ENCODE measurements at regions of chr22 and their contacts with region 1.

Region 1: DNA sequence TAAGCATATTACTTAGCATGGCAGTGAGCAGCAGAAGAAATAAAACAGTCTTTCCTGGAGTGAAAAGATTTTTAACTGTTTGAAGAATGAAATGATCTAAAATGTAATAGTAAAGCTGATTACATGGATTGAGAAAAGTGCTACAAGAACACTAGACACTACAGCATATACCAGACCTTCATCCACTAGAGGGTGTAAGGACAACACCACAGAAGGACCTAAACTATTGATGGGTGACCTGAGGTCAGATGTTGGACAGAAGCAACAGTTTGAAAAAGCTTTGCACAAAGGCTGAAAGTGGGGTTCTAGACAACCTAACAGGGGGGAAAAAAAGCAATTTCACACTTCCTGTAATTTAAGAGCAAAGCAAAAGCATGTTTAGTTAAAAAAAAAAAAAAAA is 97.7 kb downstream of the RBFOX2 start:
- DNase-seq: peak; percentile 67

Region 2: DNA sequence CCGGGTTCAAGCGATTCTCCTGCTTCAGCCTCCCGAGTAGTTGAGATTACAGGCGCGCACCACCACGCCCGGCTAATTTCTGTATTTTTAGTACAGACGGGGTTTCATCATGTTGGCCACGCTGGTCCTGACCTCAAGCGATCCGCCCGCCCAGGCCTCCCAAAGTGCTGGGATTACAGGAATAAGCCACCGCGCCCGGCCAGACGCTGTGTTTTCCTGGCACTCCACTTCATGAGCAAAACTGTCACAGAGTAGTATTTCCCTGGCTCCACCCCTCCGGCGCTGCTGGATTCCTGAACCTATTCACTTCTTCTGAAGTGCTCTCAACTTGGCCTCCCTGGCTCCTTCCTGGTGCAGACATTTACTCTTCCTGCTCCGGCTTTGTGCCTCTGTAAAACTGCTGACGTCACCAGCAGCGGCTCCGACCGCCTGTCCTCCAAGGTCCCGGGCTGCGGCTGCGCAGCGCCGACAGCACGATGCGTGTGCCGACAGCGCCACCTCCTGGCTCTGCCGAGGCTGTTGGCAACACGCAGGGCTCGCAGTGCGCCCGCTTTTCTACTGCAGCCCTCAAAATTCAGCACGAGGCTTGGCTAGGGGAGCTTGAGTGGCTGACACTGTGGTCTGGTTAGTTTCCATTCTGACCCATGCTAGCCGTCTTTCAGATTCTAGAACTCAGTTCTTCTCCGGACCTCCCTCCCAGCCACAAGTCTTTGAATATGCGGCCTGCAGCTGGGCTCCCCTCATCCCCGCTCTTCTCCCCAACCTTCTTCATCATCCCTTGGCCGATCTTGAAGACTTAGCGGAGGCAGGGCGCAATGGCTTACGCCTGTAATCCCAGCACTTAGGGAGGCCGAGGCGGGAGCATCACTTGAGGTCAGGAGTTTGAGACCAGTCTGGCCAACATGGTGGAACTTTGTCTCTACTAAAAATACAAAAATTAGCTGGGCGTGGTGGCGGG is 193.0 kb after region 1 on chr22:
- in situ Hi-C with region 1: loop called (anchors 25 kb)
- DNase-seq: peak; percentile 93